ENCODE measurements at regions of chrX and their contacts with region 1.

Region 1: GRCh38 chrX:13000301-13000811 is 25.4 kb downstream of the TMSB4X start:
- DNase-seq: peak; percentile 78
- H3K4me3 Mint-ChIP-seq: peak overlapping the region; percentile 75
- H3K27ac Mint-ChIP-seq: peak overlapping the region; percentile 95
- H3K4me1 Mint-ChIP-seq: peaks cover 55% of the 10 kb centered on the region
- H3K27me3 Mint-ChIP-seq: no peaks in the 10 kb centered on the region

Region 2: DNA sequence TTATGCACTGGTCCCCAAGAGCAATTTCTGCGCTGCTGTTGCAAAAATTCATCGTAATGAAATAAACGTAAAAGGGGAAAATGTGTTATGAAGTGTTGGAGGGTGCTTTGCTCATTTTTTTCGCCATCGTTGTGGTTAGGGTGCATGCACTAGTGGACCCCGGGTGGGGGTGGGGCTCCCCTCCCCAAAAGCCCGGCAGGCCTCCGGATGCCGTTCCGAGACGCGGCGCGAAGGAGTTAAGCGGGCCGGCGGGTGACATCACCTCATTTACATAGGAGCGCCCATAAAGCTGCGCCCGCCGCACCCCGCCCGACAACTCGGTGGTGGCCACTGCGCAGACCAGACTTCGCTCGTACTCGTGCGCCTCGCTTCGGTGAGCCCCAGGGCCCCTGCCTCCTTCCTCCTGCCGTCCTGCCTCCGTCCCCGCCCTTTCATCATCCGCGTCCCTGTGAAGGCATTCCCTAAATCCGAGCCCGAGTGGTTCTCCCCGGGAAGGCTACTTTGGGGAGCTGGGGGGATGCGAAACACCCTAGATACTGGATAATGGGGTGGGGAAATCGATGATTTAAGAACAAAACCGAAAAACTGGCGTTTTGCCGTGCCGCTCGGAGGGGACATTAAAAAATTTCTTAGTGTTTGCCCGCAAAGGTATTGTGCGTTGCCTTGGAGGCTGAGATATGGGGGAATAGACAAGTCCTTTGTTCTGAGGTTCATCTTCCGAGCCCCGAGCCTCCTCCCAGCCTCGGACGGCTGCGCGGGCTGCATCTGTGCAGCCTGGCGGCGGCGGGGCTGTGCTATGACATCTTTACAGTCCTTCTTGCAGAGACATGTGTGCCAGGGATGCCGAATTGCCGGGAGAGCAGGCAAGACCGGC is 25.3 kb before region 1 on chrX and contains the start of gene TMSB4X:
- intact Hi-C with region 1: loop called (anchors 1 kb)
- DNase-seq: peak; percentile 96
- H3K4me3 Mint-ChIP-seq: peak within 1 kb of the TSS; percentile 97
- H3K27ac Mint-ChIP-seq: peak within 1 kb of the TSS; percentile 98
- H3K4me1 Mint-ChIP-seq: peaks cover 32% of the 10 kb centered on the region
- H3K27me3 Mint-ChIP-seq: no peaks in the 10 kb centered on the region
- total RNA-seq, gene TMSB4X: 5,263 and 5,311 TPM in 2 replicates

Region 3: GRCh38 chrX:13013363-13014110 is 13.2 kb after region 1 on chrX:
- intact Hi-C with region 1: loop called (anchors 1 kb)
- DNase-seq: peak; percentile 69
- H3K4me3 Mint-ChIP-seq: peak overlapping the region; percentile 51
- H3K27ac Mint-ChIP-seq: peak overlapping the region; percentile 89
- H3K4me1 Mint-ChIP-seq: peaks cover 49% of the 10 kb centered on the region
- H3K27me3 Mint-ChIP-seq: no peaks in the 10 kb centered on the region

Region 4: DNA sequence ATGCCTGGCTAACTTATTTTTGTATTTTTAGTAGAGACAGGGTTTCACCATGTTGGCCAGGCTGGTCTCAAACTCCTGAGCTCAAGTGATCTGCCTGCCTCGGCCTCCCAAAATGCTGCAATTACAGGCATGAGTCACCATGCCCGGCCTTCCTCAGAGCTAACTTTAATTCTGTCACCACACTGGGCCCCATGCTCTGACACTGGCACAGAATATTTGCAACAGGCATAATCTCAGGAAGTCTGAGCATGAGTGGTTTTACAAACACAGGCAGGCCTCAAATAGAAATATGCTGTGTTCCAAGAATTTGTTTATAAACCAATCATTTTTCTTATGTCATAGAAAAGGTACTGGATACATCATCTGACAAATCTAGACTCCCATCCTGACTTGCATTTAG is 76.8 kb after region 1 on chrX:
- intact Hi-C with region 1: loop called (anchors 1 kb)
- DNase-seq: peak; percentile 71
- H3K4me3 Mint-ChIP-seq: no peak overlapping the region
- H3K27ac Mint-ChIP-seq: peak overlapping the region; percentile 88
- H3K4me1 Mint-ChIP-seq: peaks cover 60% of the 10 kb centered on the region
- H3K27me3 Mint-ChIP-seq: no peaks in the 10 kb centered on the region

Region 5: GRCh38 chrX:13487731-13488523 is 487.6 kb after region 1 on chrX:
- intact Hi-C with region 1: loop called (anchors 5 kb)
- DNase-seq: peak; percentile 85
- H3K4me3 Mint-ChIP-seq: no peak overlapping the region
- H3K27ac Mint-ChIP-seq: peak overlapping the region; percentile 81
- H3K4me1 Mint-ChIP-seq: peaks cover 20% of the 10 kb centered on the region
- H3K27me3 Mint-ChIP-seq: no peaks in the 10 kb centered on the region